ENCODE measurements at regions of chr3 and their contacts with region 1.

Region 1: DNA sequence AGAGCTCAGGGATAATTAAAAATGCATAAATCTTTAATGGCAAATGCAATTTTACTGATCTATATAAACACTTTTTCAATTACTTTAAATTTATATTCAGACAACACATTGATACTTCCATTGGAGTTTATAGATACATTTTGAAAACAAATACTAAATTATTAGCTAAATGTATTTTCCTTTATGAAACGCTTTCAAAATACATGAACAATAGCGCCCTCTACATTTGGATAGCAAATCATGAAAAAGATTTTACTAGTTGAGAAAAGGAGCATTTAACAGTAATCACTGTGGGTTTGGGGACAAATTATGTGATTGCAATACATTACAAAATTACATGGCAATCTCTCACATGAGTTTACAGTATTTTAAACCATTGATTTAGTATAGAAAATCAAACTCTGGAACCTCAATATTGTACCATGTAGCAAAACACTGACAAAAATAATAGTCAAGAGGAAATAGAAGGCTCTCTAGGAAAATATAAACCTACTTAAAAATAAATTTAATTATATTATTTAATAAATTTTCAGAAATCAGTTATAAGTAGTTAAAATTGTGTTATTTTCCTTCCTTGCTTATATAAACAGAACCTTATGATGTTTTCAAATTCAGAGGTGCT is 207.9 kb downstream of the ZIC1 start:
- DNase-seq: peak; percentile 4
- H3K4me3 ChIP-seq: no peak overlapping the region
- H3K27ac ChIP-seq: no peak overlapping the region
- H3K4me1 ChIP-seq: no peaks in the 10 kb centered on the region
- H3K27me3 ChIP-seq: no peaks in the 10 kb centered on the region
- CTCF ChIP-seq: peak; percentile 77
- EP300 ChIP-seq: no peak
- RAD21 ChIP-seq: peak; percentile 62

Region 2: GRCh38 chr3:147356909-147357900 is 259.9 kb before region 1 on chr3:
- CTCF ChIA-PET with region 1: interaction called, 11 read pairs
- POLR2A ChIA-PET with region 1: no interaction called
- DNase-seq: peak; percentile 55
- H3K4me3 ChIP-seq: no peak overlapping the region
- H3K27ac ChIP-seq: no peak overlapping the region
- H3K4me1 ChIP-seq: peaks cover 0 to 2% of the 10 kb centered on the region in 2 experiments; a peak in 1 of 4 replicates
- H3K27me3 ChIP-seq: peaks cover 76% of the 10 kb centered on the region
- CTCF ChIP-seq: peak; percentile 25
- EP300 ChIP-seq: no peak
- RAD21 ChIP-seq: peak; percentile 16; the same call in 1 of the 2 replicates

Region 3: DNA sequence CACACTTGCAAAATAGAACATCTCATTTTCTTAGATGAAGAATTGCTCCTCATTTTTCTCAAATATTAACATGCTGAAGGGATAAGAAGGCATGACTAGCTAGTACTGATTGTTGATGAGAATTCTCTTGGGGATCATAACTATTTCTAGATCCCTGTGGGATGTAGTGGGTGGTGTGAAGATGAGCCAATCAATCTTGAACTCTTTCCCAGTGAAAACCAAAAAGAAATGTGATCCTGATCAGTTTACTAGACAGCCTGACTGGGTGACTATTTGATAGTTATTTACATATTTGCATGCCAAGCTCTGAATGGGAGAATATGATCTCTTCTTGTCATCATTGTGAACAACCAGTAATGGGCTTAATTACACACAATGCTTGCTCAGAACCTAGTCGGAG is 144.3 kb before region 1 on chr3:
- CTCF ChIA-PET with region 1: no interaction called
- POLR2A ChIA-PET with region 1: no interaction called
- DNase-seq: no peak
- H3K4me3 ChIP-seq: no peak overlapping the region
- H3K27ac ChIP-seq: no peak overlapping the region
- H3K4me1 ChIP-seq: no peaks in the 10 kb centered on the region
- H3K27me3 ChIP-seq: no peaks in the 10 kb centered on the region
- CTCF ChIP-seq: no peak
- EP300 ChIP-seq: no peak
- RAD21 ChIP-seq: no peak

Region 4: DNA sequence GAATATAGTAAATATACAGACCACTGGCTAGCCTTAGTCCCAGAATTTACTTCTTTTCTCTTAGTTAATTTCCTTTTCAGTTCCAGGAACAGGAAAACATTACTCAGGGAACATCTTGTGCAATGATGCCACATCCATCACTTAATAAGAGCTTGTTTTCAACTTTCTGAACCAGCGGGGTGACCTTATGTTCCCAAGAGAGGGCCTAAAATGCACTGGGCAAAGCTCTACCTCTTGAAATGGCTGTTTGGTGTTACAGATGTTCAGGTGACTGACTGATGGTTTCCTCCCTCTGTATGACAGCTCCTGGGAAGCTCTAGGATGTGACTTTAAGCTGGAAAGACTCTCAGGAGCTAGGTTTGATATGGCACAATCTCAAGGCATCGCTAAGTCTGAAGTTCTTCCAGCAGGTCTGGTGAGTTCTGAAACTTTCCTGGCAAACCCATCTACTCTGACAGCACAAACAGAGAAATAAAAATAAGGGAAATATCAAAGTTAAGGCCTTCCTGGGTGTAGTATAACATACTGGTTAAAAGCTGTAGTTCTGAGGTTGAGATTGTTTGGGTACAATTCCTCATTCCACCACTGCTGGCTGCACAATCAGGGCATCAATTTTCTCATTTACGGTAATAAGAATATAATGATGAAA is 109.3 kb before region 1 on chr3:
- CTCF ChIA-PET with region 1: no interaction called
- POLR2A ChIA-PET with region 1: no interaction called
- DNase-seq: no peak
- H3K4me3 ChIP-seq: no peak overlapping the region
- H3K27ac ChIP-seq: no peak overlapping the region
- H3K4me1 ChIP-seq: no peaks in the 10 kb centered on the region
- H3K27me3 ChIP-seq: no peaks in the 10 kb centered on the region
- CTCF ChIP-seq: no peak
- EP300 ChIP-seq: no peak
- RAD21 ChIP-seq: no peak